K562 (cell line): ENCODE measurements at regions of chr2 and their contacts with region 1.

Region 1: DNA sequence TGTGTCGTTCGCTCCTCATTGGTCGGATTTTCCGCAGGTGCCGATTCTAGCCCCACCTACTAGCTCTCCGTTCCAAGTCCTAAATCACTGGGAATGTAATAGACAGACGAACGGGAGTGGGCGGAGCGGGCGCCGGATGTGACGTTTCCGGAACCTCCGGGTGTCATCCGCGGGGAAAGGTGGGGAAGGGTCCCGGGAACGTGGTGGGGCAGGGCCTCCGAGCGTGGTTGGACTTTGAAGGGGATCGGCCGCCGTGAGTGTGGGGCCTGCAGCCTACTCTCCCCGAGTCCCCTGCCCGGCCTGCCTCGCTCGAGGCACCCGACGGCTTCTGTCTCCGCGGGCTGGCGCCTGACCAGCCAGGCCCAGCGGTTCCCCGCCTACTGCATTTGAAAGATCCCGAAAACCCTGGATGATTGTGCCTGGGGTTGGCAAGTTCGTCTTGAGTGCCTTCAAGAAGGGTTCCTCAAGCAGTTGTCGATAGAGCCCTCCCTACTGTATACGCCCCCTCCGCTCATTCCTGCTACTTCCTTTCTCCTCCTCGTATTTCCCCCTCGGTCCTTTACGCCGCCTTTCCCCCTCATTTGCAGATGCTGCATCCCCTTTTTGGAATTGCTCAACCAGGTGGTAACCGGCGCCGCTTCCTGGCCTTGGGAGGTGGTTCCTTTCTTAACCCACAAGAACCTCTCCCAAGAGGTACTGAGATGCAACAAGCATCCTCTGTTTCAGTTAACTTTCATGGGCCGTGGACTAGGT is at the start of gene STAMBP:
- DNase-seq: peak; percentile 95 to 98 (median 96)
- ATAC-seq: peak; percentile 95
- H3K4me3 ChIP-seq: peak within 1 kb of the TSS; percentile 62
- H3K27ac ChIP-seq: peak within 1 kb of the TSS; percentile 89
- H3K4me1 ChIP-seq: peaks cover 7 to 13% of the 10 kb centered on the region in 2 experiments; a peak in 4 of 5 replicates
- H3K27me3 ChIP-seq: no peaks in the 10 kb centered on the region
- CTCF ChIP-seq: no peak
- EP300 ChIP-seq: no peak
- POLR2A ChIP-seq: peak; percentile 89
- RAD21 ChIP-seq: no peak
- polyA plus RNA-seq, gene STAMBP: 50.1 to 75.2 TPM

Region 2: DNA sequence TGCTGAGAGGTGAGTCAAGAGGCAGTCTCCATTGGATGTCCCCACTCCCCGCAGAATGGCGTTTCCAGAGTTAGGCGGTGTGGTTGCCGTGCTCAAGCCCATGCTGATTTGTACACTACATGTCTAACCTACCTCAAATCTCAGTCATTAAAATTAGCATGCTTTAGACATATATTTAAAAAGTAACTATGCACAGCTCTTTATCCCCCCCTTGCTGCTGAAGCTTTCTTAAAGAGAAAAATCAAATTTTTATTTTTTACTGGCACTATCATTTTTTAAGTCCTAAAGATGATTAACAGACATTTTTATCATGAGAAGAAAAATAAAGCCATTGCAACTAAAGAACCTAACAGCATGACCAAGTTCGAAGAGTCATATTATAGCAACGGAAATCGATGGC is 275.8 kb after region 1 on chr2:
- CTCF ChIA-PET with region 1: no interaction called
- POLR2A ChIA-PET with region 1: no interaction called
- in situ Hi-C with region 1: no loop called
- intact Hi-C with region 1: loop called (anchors 10 kb)
- DNase-seq: no peak
- ATAC-seq: no peak
- H3K4me3 ChIP-seq: no peak overlapping the region
- H3K27ac ChIP-seq: no peak overlapping the region
- H3K4me1 ChIP-seq: peaks cover 0 to 7% of the 10 kb centered on the region in 2 experiments; a peak in 1 of 5 replicates
- H3K27me3 ChIP-seq: no peaks in the 10 kb centered on the region
- CTCF ChIP-seq: peak in 1 of 3 experiments; percentile 47; a peak in 2 of 6 replicates
- EP300 ChIP-seq: no peak
- POLR2A ChIP-seq: no peak
- RAD21 ChIP-seq: peak; percentile 35 to 43

Region 3: DNA sequence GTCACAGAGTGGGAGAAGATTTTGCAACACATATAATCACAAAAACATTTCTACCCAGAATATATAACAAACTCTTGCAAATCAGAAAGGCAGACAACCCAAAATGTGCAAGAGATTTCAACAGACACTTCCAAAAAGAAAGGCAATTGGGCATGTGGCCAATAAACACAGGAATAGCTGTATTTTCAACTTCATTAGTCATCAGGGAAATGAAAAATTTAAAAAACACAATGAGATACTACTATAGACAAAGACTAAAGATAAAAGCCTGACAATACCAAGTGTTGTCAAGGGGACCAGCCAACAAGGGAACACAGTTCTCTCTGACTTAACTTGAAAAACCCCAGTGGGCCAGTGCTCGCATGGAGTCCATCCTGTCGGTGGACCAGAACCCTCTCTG is 409.9 kb after region 1 on chr2:
- CTCF ChIA-PET with region 1: no interaction called
- POLR2A ChIA-PET with region 1: no interaction called
- in situ Hi-C with region 1: no loop called
- intact Hi-C with region 1: no loop called
- DNase-seq: no peak
- ATAC-seq: no peak
- H3K4me3 ChIP-seq: no peak overlapping the region
- H3K27ac ChIP-seq: no peak overlapping the region
- H3K4me1 ChIP-seq: peaks cover 4 to 6% of the 10 kb centered on the region in 2 experiments; a peak in 2 of 5 replicates
- H3K27me3 ChIP-seq: no peaks in the 10 kb centered on the region; a peak in 2 of 5 replicates
- CTCF ChIP-seq: no peak
- EP300 ChIP-seq: no peak
- POLR2A ChIP-seq: no peak
- RAD21 ChIP-seq: no peak

Region 4: GRCh38 chr2:74250189-74250631 is 421.2 kb after region 1 on chr2:
- CTCF ChIA-PET with region 1: interaction called, 3 read pairs
- POLR2A ChIA-PET with region 1: no interaction called
- in situ Hi-C with region 1: no loop called
- intact Hi-C with region 1: loop called (anchors 10 kb)
- DNase-seq: peak; percentile 72 to 76 (median 75)
- ATAC-seq: peak; percentile 88
- H3K4me3 ChIP-seq: no peak overlapping the region
- H3K27ac ChIP-seq: no peak overlapping the region
- H3K4me1 ChIP-seq: peaks cover 0 to 3% of the 10 kb centered on the region in 2 experiments; a peak in 2 of 5 replicates
- H3K27me3 ChIP-seq: peaks cover 9 to 40% of the 10 kb centered on the region in 2 experiments; a peak in 4 of 5 replicates
- CTCF ChIP-seq: peak; percentile 75 to 87 (median 86)
- EP300 ChIP-seq: no peak; the same call in 1 of the 2 replicates
- POLR2A ChIP-seq: no peak
- RAD21 ChIP-seq: peak; percentile 72 to 89